CD4-positive, alpha-beta memory T cell (primary cell): ENCODE measurements at regions of chr12 and their contacts with region 1.

Region 1: DNA sequence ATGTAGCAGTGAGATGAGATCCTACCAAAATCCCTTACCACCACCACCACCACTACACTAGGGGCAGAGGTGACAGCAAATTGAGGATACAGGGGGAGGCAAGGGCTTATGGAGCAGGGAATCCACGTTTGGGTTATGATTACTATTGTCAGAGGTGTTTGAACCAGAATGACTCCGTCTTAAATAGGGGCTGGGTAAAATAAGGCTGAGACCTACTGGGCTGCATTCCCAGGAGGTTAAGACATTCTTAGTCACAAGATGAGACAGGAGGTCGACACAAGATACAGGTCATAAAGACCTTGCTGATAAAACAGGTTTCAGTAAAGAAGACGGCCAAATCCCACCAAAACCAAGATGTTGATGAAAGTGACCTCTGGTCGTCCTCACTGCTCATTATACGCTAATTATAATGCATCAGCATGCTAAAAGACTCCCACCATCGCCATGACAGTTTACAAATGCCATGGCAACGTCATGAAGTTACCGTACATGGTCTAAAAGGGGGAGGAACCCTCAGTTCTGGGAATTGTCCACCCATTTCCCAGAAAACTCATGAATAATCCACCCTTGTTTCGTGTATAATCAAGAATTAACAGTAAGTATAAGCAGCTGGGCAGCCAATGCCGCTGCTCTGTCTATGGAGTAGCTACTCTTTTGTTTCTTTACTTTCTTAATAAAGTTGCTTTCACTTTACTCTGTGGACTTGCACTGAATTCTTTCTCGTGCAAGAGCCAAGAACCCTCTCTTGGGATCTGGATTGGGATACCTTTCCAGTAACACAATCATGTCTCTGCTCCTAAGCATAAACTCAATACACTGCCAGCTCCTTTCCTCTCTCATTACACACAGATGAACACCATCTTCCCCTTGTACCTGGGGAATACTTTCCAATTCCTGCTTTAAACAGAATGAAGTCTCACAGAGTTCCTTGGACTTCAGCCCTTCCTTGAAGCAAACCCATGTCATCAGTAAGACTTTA is 16.7 kb upstream of the CRY1 start:
- DNase-seq: no peak
- H3K4me3 ChIP-seq: no peak overlapping the region
- H3K4me3 Mint-ChIP-seq: no peak overlapping the region
- H3K27ac ChIP-seq: no peak overlapping the region
- H3K27ac Mint-ChIP-seq: no peak overlapping the region
- H3K4me1 ChIP-seq: no peaks in the 10 kb centered on the region
- H3K4me1 Mint-ChIP-seq: peaks cover 0 to 3% (median 0%) of the 10 kb centered on the region in 4 donors
- H3K27me3 ChIP-seq: no peaks in the 10 kb centered on the region
- H3K27me3 Mint-ChIP-seq: peaks cover 8 to 20% of the 10 kb centered on the region in 2 donors

Region 2: GRCh38 chr12:106386813-106387535 is 723.1 kb before region 1 on chr12:
- CTCF ChIA-PET with region 1: interaction called, 13 read pairs
- POLR2A ChIA-PET with region 1: no interaction called
- intact Hi-C with region 1: no loop called
- DNase-seq: no peak
- H3K4me3 ChIP-seq: no peak overlapping the region
- H3K4me3 Mint-ChIP-seq: no peak overlapping the region
- H3K27ac ChIP-seq: no peak overlapping the region
- H3K27ac Mint-ChIP-seq: no peak overlapping the region
- H3K4me1 ChIP-seq: no peaks in the 10 kb centered on the region
- H3K4me1 Mint-ChIP-seq: peaks cover 0 to 4% (median 0%) of the 10 kb centered on the region in 4 donors
- H3K27me3 ChIP-seq: no peaks in the 10 kb centered on the region
- H3K27me3 Mint-ChIP-seq: no peaks in the 10 kb centered on the region

Region 3: GRCh38 chr12:107014028-107014427 is 96.0 kb before region 1 on chr12:
- CTCF ChIA-PET with region 1: interaction called, 28 read pairs
- POLR2A ChIA-PET with region 1: no interaction called
- intact Hi-C with region 1: no loop called
- DNase-seq: peak; percentile 19 to 60 (median 39)
- H3K4me3 ChIP-seq: no peak overlapping the region
- H3K4me3 Mint-ChIP-seq: no peak overlapping the region
- H3K27ac ChIP-seq: no peak overlapping the region
- H3K27ac Mint-ChIP-seq: peak overlapping the region in 4 of 7 donors; percentile 13 to 60 (median 34)
- H3K4me1 ChIP-seq: no peaks in the 10 kb centered on the region
- H3K4me1 Mint-ChIP-seq: peaks cover 0 to 6% (median 5%) of the 10 kb centered on the region in 4 donors
- H3K27me3 ChIP-seq: no peaks in the 10 kb centered on the region
- H3K27me3 Mint-ChIP-seq: no peaks in the 10 kb centered on the region

Region 4: DNA sequence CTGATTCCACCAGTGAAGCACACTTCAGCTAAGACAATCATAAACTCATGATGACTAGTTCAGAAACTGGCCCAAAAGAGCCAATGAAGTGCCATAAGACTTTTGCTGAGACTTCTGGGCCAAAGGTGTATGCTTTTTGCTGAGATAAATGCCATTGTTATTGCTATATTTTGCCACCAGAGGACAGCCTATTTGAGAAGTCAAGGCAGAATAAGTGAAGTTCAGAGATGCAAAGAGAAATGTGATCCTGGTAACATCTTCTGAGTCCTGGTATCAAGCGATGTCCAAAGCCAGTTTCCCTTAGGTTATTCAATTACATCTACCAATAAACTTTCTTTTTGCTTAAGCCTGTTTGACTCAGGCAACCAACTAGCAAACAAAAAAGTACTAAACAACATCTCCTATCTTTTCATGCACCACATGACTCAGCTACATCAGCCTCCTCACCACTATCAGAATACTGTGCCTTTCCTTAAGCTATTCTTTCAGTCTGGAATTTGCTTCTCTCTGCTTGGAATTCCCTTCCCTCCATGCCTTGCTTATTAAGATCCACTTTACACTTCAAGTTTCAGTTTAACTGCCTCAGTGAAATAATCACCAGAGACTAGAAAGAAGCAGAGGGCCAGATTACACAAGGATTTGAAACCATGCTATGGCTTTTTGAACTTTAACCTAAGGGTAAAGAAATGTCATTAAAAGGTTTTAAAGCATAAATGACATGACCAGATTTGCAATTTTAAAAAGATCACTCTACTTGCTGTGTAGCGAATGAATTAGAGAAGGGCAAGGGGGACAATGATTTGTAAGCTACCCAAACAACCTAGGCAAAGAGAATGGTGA is 30.6 kb before region 1 on chr12:
- CTCF ChIA-PET with region 1: interaction called, 23 read pairs
- POLR2A ChIA-PET with region 1: no interaction called
- intact Hi-C with region 1: no loop called
- DNase-seq: peak in 4 of 5 donors; percentile 27 to 35 (median 29)
- H3K4me3 ChIP-seq: no peak overlapping the region
- H3K4me3 Mint-ChIP-seq: no peak overlapping the region
- H3K27ac ChIP-seq: no peak overlapping the region
- H3K27ac Mint-ChIP-seq: no peak overlapping the region
- H3K4me1 ChIP-seq: peaks cover 18% of the 10 kb centered on the region
- H3K4me1 Mint-ChIP-seq: peaks cover 11 to 17% (median 13%) of the 10 kb centered on the region in 4 donors
- H3K27me3 ChIP-seq: no peaks in the 10 kb centered on the region
- H3K27me3 Mint-ChIP-seq: no peaks in the 10 kb centered on the region